BJ (cell line): ENCODE measurements at regions of chr17 and their contacts with region 1.

Region 1: DNA sequence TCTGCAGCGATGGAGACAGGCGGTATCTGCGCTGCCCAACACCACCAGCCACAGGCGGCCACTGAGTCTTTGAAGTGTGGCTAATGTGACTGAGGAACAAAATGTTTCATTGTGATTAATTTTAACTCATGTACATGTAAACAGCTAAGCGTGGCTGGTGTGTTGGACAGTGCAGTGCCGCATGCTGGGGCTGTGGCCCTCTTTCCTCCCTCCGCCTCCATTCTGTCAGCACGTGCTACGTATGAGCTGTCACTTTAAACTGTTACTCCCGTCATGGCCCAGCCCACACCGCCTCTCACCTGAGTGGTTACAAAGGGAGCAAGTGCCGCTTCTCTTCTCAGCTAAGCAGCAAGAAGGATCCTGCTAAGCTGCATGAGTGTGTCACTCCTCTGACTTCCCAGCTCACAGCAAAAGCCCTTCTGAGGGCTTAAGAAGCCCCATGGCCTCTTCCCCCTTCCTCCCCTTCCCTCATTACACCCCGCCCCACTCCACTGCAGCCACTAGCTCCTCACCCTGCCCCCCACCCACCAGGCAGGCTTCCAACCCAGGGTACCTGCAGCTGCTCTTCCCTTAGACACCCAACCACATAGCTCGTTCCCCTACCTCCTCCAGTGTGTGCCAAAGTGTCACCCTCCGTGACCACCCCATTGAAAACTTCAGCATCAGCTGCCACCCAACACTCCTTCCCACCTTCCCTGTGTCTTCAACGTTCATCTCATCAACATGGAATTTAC is 15.0 kb downstream of the HASPIN start:
- DNase-seq: no peak
- H3K4me3 ChIP-seq: no peak overlapping the region
- H3K27me3 ChIP-seq: no peaks in the 10 kb centered on the region
- CTCF ChIP-seq: no peak

Region 2: GRCh38 chr17:3723556-3724369 is 15.0 kb before region 1 on chr17 and contains the start of gene HASPIN:
- CTCF ChIA-PET with region 1: interaction called, 19 read pairs
- POLR2A ChIA-PET with region 1: no interaction called
- DNase-seq: no peak
- H3K4me3 ChIP-seq: peak within 1 kb of the TSS; percentile 77
- H3K27me3 ChIP-seq: no peaks in the 10 kb centered on the region
- CTCF ChIP-seq: peak; percentile 48
- polyA plus RNA-seq, gene HASPIN: 2.1 and 2.9 TPM in 2 replicates

Region 3: DNA sequence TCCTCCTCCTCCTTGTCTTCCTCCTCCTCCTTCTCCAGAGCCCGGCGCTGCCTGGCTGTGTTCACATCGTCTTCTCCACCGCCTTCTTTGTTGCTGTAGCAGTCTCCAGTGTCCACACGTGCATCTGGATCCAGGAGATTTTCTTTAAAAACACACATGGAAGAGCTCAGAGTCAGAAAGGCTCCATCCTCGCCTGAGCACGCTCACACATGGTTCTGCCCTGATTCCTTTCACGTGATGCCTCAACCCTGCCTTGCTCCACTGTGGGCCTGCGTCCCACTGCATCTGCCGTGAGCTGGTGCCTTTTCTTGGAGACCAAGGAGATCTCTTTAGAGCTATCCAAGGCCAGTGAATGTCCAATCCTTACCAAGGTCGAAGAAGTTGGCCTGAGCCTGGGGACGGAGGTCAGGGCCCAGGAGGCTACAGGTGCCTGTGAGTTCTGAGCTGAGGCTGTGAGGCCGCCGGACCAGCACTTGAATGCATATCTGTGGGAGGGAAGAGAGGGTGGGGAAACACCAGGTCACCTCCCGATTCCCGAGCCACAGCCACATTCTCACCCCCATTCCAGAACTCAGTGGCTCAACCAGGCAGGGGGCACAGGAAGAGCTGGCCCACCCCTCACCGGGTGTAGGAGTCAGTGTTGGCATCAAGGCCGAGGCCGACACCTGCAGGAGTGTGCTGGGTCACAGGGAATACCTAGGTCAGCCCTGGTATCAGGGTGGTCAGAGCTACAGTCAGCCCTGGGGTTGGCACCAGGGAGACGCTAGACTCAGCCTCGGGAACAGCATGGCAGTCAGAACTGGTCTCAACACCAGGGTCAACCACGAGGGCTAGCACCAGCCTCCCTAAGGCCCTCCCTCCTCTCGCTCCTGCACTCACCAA is 22.5 kb after region 1 on chr17:
- CTCF ChIA-PET with region 1: interaction called, 12 read pairs
- POLR2A ChIA-PET with region 1: no interaction called
- DNase-seq: no peak
- H3K4me3 ChIP-seq: no peak overlapping the region
- H3K27me3 ChIP-seq: no peaks in the 10 kb centered on the region; the same call in 1 of the 2 replicates
- CTCF ChIP-seq: no peak

Region 4: GRCh38 chr17:3802461-3803307 is 64.0 kb after region 1 on chr17:
- CTCF ChIA-PET with region 1: interaction called, 56 read pairs
- POLR2A ChIA-PET with region 1: no interaction called
- DNase-seq: peak; percentile 29
- H3K4me3 ChIP-seq: no peak overlapping the region
- H3K27me3 ChIP-seq: no peaks in the 10 kb centered on the region
- CTCF ChIP-seq: no peak

Region 5: GRCh38 chr17:3821101-3821500 is 82.4 kb after region 1 on chr17:
- CTCF ChIA-PET with region 1: interaction called, 160 read pairs
- POLR2A ChIA-PET with region 1: no interaction called
- DNase-seq: no peak
- H3K4me3 ChIP-seq: no peak overlapping the region
- H3K27me3 ChIP-seq: no peaks in the 10 kb centered on the region
- CTCF ChIP-seq: no peak

Region 6: DNA sequence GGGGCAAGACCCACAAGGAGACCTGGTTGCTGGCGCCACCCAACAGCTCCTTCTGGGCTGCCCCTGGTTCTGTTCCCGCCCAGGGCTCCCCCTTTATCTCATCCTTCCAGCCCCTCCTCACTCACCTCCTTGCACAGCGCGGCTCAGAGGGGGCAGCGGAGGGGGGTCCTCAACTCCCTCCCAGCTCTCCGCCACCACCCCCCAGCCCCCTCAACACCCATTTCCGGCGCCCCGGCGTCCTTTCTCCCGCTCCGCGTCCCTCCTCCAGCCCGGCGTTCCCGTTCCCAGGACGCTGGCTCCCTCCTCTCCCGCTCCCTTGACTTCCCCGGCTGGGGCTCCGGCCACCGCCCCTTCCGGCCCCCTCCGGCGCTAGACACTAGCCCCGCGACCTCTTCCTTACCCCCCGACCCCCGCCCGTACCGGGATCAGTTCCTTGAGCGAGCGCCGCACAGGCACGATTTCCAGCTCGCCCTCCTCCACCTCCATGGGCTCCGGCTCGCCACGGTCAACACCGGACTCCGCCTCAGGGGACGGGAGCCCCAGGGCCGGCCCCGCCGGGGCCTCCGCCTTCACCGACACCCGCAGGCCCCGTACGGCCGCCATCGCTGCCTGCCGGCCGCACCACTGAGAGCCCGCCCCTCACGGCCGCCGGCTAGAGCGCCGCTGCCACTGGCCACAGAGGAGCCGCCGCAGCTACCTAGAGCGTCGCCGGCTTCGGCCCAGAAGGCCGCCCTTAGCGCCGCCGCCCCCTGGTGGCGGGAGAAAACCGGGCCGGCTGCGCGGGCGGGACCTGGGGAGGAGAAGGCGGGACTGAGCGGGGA is 107.1 kb after region 1 on chr17 and contains the start of gene NCBP3:
- CTCF ChIA-PET with region 1: interaction called, 57 read pairs
- POLR2A ChIA-PET with region 1: no interaction called
- DNase-seq: peak; percentile 33
- H3K4me3 ChIP-seq: peak within 1 kb of the TSS; percentile 98
- H3K27me3 ChIP-seq: peaks cover 2% of the 10 kb centered on the region; the same call in 1 of the 2 replicates
- CTCF ChIP-seq: peak; percentile 87
- polyA plus RNA-seq, gene NCBP3: 9.7 and 19.3 TPM in 2 replicates

Region 7: GRCh38 chr17:4004517-4005295 is 266.0 kb after region 1 on chr17:
- CTCF ChIA-PET with region 1: interaction called, 19 read pairs
- POLR2A ChIA-PET with region 1: no interaction called
- DNase-seq: no peak
- H3K4me3 ChIP-seq: no peak overlapping the region
- H3K27me3 ChIP-seq: no peaks in the 10 kb centered on the region
- CTCF ChIP-seq: peak; percentile 60